ENCODE measurements at regions of chr16 and their contacts with region 1.

Region 1: GRCh38 chr16:24198807-24199533 is 57.2 kb upstream of the CACNG3 start:
- DNase-seq: no peak

Region 2: DNA sequence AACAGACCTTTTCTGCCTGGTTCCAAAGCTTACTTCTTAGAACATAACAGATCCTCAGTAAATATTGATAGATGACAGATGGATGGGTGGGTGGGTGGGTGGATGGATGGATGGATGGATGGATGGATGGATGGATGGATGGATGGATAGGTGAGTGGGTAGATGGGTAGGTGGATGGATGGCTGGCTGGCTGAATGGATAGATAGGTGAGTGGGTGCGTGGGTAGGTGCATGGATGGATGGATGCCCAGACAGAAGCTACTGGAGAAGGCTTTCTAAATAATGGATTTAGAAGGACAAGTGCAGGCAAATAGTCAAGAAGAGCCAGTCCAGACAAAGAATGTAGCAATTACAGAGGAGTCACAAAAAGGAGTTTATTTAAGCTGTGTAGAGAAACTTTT is 996.8 kb before region 1 on chr16:
- intact Hi-C with region 1: loop called in 1 of 2 experiments (anchors 5 kb)
- DNase-seq: no peak

Region 3: DNA sequence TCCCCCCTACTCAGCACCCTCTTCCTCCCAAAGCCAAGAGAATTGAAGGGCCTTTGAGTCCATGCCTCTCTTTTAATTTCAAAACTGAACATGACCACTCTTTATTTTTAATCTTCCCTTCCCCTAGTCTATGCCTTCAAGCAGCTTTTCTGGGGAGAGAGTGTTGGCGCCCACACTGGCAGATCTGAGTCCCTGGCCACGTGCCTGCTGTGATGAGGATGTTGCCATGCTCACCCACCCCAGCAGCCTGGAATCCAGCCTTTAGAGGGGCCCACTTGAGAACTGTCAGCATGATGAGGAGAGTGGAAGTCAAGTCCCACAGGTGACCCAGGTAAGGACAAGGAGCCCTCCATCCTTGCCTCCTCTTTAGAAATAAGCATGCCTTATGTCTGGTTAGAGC is 36.8 kb after region 1 on chr16:
- intact Hi-C with region 1: loop called in 1 of 2 experiments (anchors 1 kb)
- DNase-seq: no peak